ENCODE measurements at regions of chr14 and their contacts with region 1.

Region 1: DNA sequence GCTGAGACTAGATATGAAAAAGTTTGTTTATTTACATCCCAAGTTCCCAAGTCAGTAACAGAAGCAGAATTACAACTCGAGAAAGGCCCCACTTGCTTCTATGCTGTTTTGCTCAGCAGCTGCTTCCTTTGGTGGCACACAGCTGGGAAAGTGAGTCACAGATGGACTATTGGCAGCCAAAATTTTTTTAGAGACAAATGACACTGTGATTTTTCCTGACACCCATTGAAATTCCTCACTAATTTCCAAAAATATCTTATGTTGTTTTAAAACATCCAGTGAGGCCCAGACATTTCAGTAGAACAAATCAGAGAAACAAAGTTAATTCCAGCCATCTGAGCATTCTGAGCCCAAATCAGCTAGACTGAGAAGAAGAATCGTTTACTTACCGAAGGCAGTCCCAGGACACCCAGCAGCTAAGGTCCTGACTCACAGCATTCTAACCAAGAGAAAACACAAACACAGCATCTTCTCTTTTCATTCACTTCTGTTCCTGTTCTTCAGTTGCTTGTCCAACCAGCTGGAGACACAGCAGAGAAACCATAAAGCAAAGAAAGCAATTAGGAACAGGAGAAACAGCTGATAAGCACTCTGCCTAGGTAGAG is 188.3 kb downstream of the DAD1 start:
- DNase-seq: no peak
- H3K4me3 ChIP-seq: no peak overlapping the region
- H3K27ac ChIP-seq: no peak overlapping the region
- H3K4me1 ChIP-seq: no peaks in the 10 kb centered on the region
- H3K27me3 ChIP-seq: no peaks in the 10 kb centered on the region
- CTCF ChIP-seq: no peak

Region 2: DNA sequence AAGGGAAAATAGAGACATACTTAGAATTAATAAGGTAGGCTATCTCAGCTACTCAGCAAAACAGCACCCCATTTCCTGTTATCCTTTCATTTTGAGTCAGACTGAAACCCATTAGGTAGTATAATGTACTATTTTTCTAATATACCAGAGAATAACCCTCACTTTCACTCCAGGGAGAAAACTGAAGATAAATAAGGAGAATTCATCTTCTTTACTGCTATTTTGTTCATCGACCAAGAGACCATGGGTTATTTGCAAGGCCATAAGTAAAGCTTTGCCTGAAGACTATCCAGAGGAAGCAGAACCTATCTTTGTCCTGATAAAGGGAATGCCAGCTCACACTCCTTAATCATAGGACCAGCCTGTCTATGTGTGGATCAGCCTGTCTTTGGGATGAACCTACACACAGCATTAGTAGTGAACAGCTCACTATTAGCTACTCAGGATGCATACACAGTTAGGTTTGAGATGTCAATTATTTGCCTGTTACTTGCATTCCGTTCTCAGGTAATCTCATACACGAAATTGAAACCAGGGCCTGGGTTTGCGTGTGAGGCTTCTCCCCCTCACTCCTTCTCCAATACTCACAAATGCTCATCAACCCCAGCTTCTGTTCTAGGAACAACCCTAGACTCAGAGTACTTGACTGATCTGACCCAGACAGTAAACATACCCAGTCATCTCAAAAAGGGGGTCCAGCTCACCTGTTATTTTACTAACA is 63.8 kb after region 1 on chr14:
- CTCF ChIA-PET with region 1: no interaction called
- dilution Hi-C with region 1: loop called (anchors 5 kb)
- in situ Hi-C with region 1: no loop called
- intact Hi-C with region 1: no loop called
- DNase-seq: no peak
- H3K4me3 ChIP-seq: no peak overlapping the region
- H3K27ac ChIP-seq: no peak overlapping the region
- H3K4me1 ChIP-seq: peaks cover 7% of the 10 kb centered on the region
- H3K27me3 ChIP-seq: no peaks in the 10 kb centered on the region
- CTCF ChIP-seq: no peak

Measured in mammary epithelial cell (primary cell).